ENCODE measurements at regions of chr5 and their contacts with region 1.

Region 1: GRCh38 chr5:73419465-73420390 is 28.8 kb downstream of the FOXD1 start:
- DNase-seq: no peak
- H3K4me3 Mint-ChIP-seq: peak overlapping the region; percentile 43
- H3K27ac Mint-ChIP-seq: no peak overlapping the region
- H3K4me1 Mint-ChIP-seq: peaks cover 11% of the 10 kb centered on the region
- H3K27me3 Mint-ChIP-seq: peaks cover 75% of the 10 kb centered on the region

Region 2: GRCh38 chr5:73374520-73375190 is 45.1 kb before region 1 on chr5:
- CTCF ChIA-PET with region 1: no interaction called
- intact Hi-C with region 1: no loop called
- DNase-seq: no peak
- H3K4me3 Mint-ChIP-seq: no peak overlapping the region
- H3K27ac Mint-ChIP-seq: no peak overlapping the region
- H3K4me1 Mint-ChIP-seq: no peaks in the 10 kb centered on the region
- H3K27me3 Mint-ChIP-seq: peaks cover 64% of the 10 kb centered on the region

Region 3: DNA sequence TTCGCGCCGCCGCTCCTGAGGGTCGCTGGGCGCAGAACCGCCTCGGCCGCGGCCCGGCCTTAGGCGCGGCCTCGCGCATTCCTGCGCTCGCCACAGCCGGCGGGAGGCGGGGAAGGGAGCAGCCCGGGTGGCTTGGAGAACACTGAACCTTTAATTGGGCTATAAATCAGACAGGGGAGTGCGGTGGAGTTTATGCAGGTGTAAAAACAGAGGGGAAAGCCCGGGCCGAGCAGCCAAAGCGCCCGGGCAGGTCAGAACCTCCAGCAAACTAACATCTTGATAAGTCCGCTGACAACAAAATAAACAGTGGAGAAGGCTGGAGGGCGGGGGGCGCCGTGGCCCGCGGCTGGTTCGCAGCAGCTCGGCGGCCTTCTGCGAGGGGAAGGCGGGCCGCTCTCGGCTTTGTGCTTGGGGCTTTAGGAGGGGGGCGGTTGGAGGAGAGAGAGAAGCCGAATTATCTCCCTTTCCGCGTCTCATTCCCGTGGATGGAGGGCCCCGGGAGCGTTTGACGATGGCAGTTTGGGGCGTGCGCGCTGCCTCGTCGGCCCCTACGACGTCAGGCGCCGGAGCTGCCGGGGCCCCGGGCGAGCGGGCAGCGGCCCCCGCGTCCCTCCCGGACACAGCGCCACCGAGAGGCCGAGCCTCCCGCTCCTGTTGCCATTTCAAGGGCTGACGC is 17.5 kb after region 1 on chr5:
- CTCF ChIA-PET with region 1: interaction called, 3 read pairs
- intact Hi-C with region 1: loop called (anchors 2 kb)
- DNase-seq: no peak
- H3K4me3 Mint-ChIP-seq: peak overlapping the region; percentile 56
- H3K27ac Mint-ChIP-seq: no peak overlapping the region
- H3K4me1 Mint-ChIP-seq: peaks cover 15% of the 10 kb centered on the region
- H3K27me3 Mint-ChIP-seq: peaks cover 78% of the 10 kb centered on the region